ENCODE measurements at regions of chr17 and their contacts with region 1.

Region 1: GRCh38 chr17:81537343-81537855 is 9.2 kb downstream of the FSCN2 start:
- DNase-seq: no peak
- H3K4me3 ChIP-seq: no peak overlapping the region
- H3K27ac ChIP-seq: no peak overlapping the region
- H3K4me1 ChIP-seq: peaks cover 3% of the 10 kb centered on the region
- H3K27me3 ChIP-seq: peaks cover 5 to 18% of the 10 kb centered on the region in 2 experiments
- CTCF ChIP-seq: peak; percentile 58 to 74
- POLR2A ChIP-seq: peak; percentile 18

Region 2: DNA sequence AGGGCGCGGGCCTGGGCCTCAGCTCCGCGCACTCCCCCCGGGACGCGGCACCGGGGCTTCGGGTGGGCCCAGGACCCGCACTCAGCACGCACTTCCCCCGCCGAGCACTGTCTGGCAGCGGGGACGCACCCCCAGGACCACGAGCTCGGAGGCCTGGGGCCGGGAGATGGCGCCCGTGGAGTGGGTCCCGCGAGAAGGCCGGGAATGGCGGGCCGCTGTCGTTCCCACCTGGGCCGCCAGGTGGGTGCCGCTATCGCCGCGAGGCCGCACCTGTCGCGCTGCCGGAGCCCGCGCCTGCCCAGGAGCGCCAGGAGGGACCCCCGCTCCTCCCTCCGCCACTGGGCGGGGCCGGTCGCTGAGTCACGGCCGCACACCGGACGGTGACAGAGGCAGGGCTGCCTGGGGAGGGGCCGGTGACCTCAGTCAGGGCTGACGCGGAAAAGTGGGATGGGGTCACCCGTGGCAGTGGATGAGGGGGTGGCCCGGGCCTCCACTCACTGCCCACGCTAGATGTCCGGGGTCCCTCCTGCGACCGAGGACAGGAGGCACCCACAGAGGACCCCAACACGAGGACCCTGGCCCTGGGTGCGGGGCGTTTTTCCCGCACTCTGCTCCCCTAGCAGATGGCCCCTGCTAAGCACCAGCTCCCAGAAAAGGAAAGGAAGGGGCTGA is 18.0 kb before region 1 on chr17:
- CTCF ChIA-PET with region 1: interaction called, 11 read pairs
- POLR2A ChIA-PET with region 1: no interaction called
- dilution Hi-C with region 1: no loop called
- intact Hi-C with region 1: no loop called
- DNase-seq: no peak
- H3K4me3 ChIP-seq: peak overlapping the region; percentile 11 to 32 (median 22)
- H3K27ac ChIP-seq: no peak overlapping the region
- H3K4me1 ChIP-seq: peaks cover 23% of the 10 kb centered on the region
- H3K27me3 ChIP-seq: no peaks in the 10 kb centered on the region
- CTCF ChIP-seq: peak; percentile 8 to 43
- POLR2A ChIP-seq: no peak

Measured in endothelial cell of umbilical vein (primary cell).